ENCODE measurements at regions of chr14 and their contacts with region 1.

Region 1: DNA sequence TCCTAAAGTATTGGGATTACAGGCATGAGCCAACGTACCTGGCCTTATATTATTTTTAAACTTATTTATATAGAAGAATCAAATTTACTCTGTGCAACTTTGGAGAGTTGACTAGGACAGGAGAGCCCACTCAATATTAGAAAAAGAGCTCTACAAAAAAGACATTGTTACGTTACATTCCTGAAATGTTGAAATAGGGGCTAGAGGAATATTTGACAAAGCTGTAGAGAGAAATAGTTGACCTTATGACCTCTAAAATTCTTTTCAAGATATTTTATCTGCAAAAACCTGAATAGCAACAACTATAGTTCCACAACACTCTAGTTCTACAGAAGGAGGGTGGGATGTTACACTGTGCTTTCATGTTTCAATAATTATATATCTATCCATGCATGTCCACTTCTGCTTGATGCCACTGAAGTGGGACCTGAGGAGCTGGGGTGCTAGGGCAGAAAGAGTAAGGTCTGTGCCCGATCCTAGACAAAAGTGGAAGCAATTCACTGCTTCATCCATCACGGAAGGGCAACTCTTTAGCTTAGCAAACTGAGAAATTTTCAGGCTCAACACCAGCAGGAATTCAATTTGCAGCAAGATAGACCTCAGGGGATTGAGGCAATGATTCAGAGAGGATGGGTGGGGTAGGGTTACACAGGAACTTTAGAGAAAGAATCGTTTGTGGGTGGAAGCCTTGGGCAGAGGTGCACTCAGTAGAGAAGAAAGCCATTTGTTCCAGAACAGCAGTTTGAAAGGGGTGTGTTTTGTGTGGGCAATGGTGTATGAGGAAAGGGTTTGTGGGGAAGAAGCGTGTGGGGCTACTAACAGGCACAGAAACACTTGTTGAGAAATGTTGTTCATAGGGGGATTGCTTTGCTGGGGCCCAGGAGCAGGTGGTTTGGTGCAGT is 16.0 kb upstream of the RNASE10 start:
- DNase-seq: no peak
- ATAC-seq: no peak
- H3K4me3 ChIP-seq: no peak overlapping the region
- H3K27ac ChIP-seq: no peak overlapping the region
- H3K4me1 ChIP-seq: no peaks in the 10 kb centered on the region
- H3K27me3 ChIP-seq: peaks cover 0 to 6% (median 0%) of the 10 kb centered on the region in 3 donors
- CTCF ChIP-seq: no peak

Region 2: GRCh38 chr14:20412411-20413044 is 76.8 kb before region 1 on chr14:
- intact Hi-C with region 1: no loop called
- DNase-seq: peak in 1 of 2 donors; percentile 20
- ATAC-seq: peak in 2 of 4 donors; percentile 0 to 22
- H3K4me3 ChIP-seq: peak overlapping the region; percentile 92
- H3K27ac ChIP-seq: peak overlapping the region; percentile 100
- H3K4me1 ChIP-seq: peaks cover 36% of the 10 kb centered on the region
- H3K27me3 ChIP-seq: no peaks in the 10 kb centered on the region
- CTCF ChIP-seq: no peak

Region 3: GRCh38 chr14:20560961-20561360 is 71.6 kb after region 1 on chr14 and contains the start of gene RNASE9:
- intact Hi-C with region 1: loop called in 1 of 2 experiments (anchors 10 kb)
- DNase-seq: no peak
- ATAC-seq: no peak
- H3K4me3 ChIP-seq: no peak within 1 kb of the TSS
- H3K27ac ChIP-seq: no peak within 1 kb of the TSS
- H3K4me1 ChIP-seq: no peaks in the 10 kb centered on the region
- H3K27me3 ChIP-seq: peaks cover 0 to 2% (median 2%) of the 10 kb centered on the region in 3 donors
- CTCF ChIP-seq: no peak
- total RNA-seq, gene RNASE9: not detected

Region 4: DNA sequence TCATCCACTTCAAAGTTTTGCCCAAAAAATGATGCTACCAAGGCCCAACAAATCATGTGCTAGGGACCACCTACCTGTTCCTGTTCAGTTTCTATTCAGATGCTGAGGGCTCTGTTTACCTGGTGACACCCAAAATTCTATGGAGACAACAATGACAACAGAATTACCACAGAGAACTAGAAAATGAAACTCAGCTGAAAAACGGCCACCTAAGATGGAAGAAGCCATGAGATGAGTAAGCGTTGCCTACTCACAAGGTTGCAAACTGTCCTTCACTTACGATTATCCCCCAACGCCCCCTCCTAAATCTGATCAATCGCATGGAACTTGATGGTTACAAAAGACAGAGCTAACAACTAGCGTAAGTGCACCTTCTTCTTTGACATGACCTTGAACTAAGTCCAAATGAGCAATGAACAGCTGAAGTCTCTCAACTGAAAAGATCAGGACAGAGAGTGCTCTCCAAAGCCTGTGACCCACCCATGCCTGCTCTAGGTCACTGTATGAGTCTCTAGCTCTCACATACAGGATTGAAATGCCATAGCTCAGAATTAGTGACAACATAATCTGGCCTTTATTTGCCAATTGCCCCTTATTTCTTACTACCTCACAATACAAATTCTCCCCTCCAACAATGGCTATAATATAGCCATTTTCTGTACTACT is 98.3 kb after region 1 on chr14 and contains the start of gene RNASE11:
- intact Hi-C with region 1: no loop called
- DNase-seq: no peak
- ATAC-seq: no peak
- H3K4me3 ChIP-seq: no peak within 1 kb of the TSS
- H3K27ac ChIP-seq: no peak within 1 kb of the TSS
- H3K4me1 ChIP-seq: no peaks in the 10 kb centered on the region
- H3K27me3 ChIP-seq: peaks cover 0 to 6% (median 5%) of the 10 kb centered on the region in 3 donors
- CTCF ChIP-seq: no peak
- total RNA-seq, gene RNASE11: not detected

Measured in psoas muscle (tissue), 8 donors.